Left ventricle myocardium superior (tissue), 1 donor: ENCODE measurements at regions of chr14 and their contacts with region 1.

Region 1: DNA sequence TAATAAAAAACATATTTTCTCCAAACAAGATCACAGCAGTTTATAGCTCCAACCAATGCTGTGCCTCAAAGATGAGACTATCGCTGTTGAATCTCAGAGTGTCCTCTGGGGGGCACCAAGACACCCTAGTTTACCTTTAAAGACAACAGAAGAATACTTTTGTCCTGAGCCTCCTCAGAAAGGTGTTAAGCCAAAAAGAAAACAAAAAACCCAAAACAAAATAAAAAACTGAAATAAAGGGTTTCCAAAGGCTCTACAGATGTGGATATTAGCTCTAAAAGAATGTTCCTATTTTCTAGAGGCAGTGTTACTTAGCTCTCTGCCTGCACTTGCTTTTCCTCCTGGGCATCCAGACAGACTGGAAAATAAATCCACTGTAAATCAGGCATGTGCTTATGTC is 86.9 kb upstream of the TTC7B start:
- DNase-seq: no peak
- ATAC-seq: peak; percentile 82

Region 2: GRCh38 chr14:91177073-91178034 is 274.3 kb after region 1 on chr14:
- intact Hi-C with region 1: loop called (anchors 10 kb)
- DNase-seq: peak; percentile 54
- ATAC-seq: peak; percentile 50

Region 3: GRCh38 chr14:91286530-91286937 is 383.4 kb after region 1 on chr14:
- intact Hi-C with region 1: loop called (anchors 10 kb)
- DNase-seq: peak; percentile 80
- ATAC-seq: peak; percentile 69